Mammary epithelial cell (primary cell): ENCODE measurements at regions of chr6 and their contacts with region 1.

Region 1: GRCh38 chr6:154156135-154156896 is 117.3 kb downstream of the OPRM1 start:
- DNase-seq: no peak
- H3K4me3 ChIP-seq: no peak overlapping the region
- H3K27ac ChIP-seq: no peak overlapping the region
- H3K4me1 ChIP-seq: no peaks in the 10 kb centered on the region
- H3K27me3 ChIP-seq: no peaks in the 10 kb centered on the region
- CTCF ChIP-seq: peak; percentile 60 to 62

Region 2: GRCh38 chr6:154276810-154277628 is 120.7 kb after region 1 on chr6:
- CTCF ChIA-PET with region 1: interaction called, 7 read pairs
- dilution Hi-C with region 1: no loop called
- in situ Hi-C with region 1: loop called (anchors 5 to 10 kb)
- intact Hi-C with region 1: loop called (anchors 1 kb)
- DNase-seq: no peak
- H3K4me3 ChIP-seq: peak overlapping the region; percentile 30 to 53 (median 43)
- H3K27ac ChIP-seq: no peak overlapping the region
- H3K4me1 ChIP-seq: no peaks in the 10 kb centered on the region
- H3K27me3 ChIP-seq: no peaks in the 10 kb centered on the region
- CTCF ChIP-seq: peak; percentile 60 to 65

Region 3: DNA sequence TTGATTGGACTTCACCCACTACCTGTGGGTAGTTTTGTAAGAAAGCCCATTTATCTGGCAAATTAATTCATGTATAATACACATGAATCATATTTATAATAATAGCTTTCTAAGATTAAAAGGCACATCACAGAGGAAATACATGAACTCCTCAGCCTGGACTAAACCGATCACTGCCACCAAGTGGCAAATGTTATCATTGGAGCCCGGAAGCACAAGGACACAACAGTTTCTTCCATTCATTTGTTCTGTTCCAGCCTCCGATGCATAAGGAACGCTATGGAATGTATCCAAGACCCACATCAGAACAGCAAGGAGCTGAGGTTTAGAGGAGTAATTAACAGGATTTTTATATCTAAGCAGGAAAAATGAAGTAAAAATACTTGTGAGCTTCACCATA is 214.2 kb after region 1 on chr6:
- CTCF ChIA-PET with region 1: no interaction called
- dilution Hi-C with region 1: no loop called
- in situ Hi-C with region 1: loop called in 1 of 2 experiments (anchors 10 kb)
- intact Hi-C with region 1: loop called (anchors 2 kb)
- DNase-seq: peak; percentile 14
- H3K4me3 ChIP-seq: no peak overlapping the region
- H3K27ac ChIP-seq: no peak overlapping the region
- H3K4me1 ChIP-seq: no peaks in the 10 kb centered on the region
- H3K27me3 ChIP-seq: no peaks in the 10 kb centered on the region
- CTCF ChIP-seq: peak; percentile 22 to 49

Region 4: DNA sequence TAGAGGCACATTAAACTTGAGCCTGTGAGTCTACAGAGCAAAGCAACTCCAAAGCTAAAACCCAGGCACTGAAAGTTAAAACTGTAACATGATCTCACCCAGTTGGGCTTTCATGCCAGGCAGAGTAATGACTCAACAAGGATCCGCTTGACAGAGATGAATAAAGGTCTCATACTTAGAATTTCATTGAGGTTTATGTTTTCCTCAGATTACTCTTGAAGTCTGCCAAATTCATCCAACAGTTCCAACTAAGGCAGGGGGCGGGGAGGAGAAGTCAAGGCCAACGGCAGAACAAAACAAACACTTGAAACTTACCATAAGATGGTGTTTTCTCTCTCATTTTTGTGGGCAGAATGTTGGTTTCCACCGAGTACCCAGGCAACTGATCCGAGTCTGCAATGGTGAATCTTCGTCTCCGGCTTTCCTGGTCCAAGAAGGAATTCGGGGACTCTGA is 254.3 kb after region 1 on chr6:
- CTCF ChIA-PET with region 1: no interaction called
- dilution Hi-C with region 1: no loop called
- in situ Hi-C with region 1: no loop called
- intact Hi-C with region 1: loop called (anchors 1 kb)
- DNase-seq: peak; percentile 86
- H3K4me3 ChIP-seq: no peak overlapping the region
- H3K27ac ChIP-seq: peak overlapping the region; percentile 35
- H3K4me1 ChIP-seq: peaks cover 14% of the 10 kb centered on the region
- H3K27me3 ChIP-seq: no peaks in the 10 kb centered on the region
- CTCF ChIP-seq: no peak

Region 5: DNA sequence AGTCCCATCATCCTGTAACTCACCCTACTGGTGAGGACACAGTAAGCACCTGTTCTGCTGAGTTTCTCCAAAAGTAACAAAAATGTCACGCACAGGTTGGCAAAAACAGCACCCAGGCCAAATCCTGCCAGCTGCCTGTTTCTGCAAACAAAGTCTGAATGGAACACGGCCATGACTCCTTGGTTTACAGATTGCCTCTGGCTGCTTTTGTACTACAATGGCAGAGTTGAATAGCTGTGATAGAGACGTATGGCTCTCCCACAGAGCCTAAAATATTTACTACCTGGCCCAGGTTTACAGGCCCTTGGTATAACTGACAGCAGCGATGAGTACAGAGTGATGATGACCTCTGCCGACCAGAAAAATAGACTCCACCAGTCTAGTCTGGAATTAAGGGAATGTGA is 301.6 kb after region 1 on chr6:
- CTCF ChIA-PET with region 1: no interaction called
- dilution Hi-C with region 1: no loop called
- in situ Hi-C with region 1: no loop called
- intact Hi-C with region 1: loop called (anchors 1 kb)
- DNase-seq: peak; percentile 58
- H3K4me3 ChIP-seq: no peak overlapping the region
- H3K27ac ChIP-seq: no peak overlapping the region
- H3K4me1 ChIP-seq: peaks cover 26% of the 10 kb centered on the region
- H3K27me3 ChIP-seq: no peaks in the 10 kb centered on the region
- CTCF ChIP-seq: peak in 1 of 2 donors; percentile 26